ENCODE measurements at regions of chr9 and their contacts with region 1.

Region 1: DNA sequence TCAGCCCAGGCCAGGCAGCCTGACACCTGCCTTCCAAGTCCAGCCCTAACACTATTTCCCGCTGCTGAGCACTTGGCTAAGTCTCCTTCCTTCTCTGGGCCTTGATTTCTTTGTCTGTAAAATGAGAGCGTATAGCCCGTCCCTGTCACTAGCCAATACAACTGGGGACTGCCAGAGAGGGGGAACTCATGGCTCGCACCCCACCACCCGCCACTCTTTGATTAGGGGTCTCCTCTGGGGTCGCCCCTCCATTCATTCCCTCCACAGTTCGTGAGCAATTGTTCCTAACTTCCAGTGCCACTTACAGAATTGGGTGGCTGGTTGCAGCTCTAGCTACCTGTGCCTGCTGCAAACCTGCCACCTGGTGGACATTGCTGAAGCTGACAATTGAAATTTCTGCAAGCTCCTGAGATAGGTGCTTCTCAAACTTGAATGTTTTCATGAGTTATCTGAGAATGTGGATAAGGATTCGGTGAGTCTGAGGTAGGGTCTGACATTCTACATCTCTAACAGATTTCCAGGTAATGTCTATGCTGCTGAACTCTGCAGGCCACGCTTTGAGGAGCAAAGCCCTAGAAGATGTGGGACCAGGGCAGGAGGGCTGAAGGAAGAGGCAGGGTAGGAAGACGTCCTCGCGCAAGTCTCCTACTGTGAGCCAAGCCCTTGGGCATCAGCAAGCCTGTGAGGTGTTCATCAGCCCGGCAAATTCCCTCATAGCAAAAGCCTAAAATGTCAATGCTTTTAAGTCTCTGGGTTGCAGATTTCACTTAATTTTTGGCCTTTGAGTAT is 13.3 kb upstream of the RECK start:
- DNase-seq: peak; percentile 40 to 74 (median 66)
- ATAC-seq: peak; percentile 83
- H3K4me3 ChIP-seq: no peak overlapping the region
- H3K4me3 Mint-ChIP-seq: no peak overlapping the region
- H3K27ac ChIP-seq: no peak overlapping the region
- H3K27ac Mint-ChIP-seq: no peak overlapping the region
- H3K4me1 ChIP-seq: no peaks in the 10 kb centered on the region
- H3K4me1 Mint-ChIP-seq: peaks cover 0 to 8% (median 5%) of the 10 kb centered on the region in 7 donors
- H3K27me3 ChIP-seq: no peaks in the 10 kb centered on the region
- H3K27me3 Mint-ChIP-seq: peaks cover 0 to 9% (median 0%) of the 10 kb centered on the region in 5 donors

Region 2: GRCh38 chr9:35790385-35791296 is 232.8 kb before region 1 on chr9:
- CTCF ChIA-PET with region 1: interaction called, 3 read pairs
- POLR2A ChIA-PET with region 1: no interaction called
- intact Hi-C with region 1: loop called in 1 of 2 experiments (anchors 1 kb)
- DNase-seq: peak; percentile 36 to 70 (median 62)
- ATAC-seq: peak; percentile 90
- H3K4me3 ChIP-seq: no peak overlapping the region
- H3K4me3 Mint-ChIP-seq: peak overlapping the region in 2 of 10 donors; percentile 31 to 58
- H3K27ac ChIP-seq: no peak overlapping the region
- H3K27ac Mint-ChIP-seq: no peak overlapping the region
- H3K4me1 ChIP-seq: no peaks in the 10 kb centered on the region
- H3K4me1 Mint-ChIP-seq: peaks cover 6 to 21% (median 10%) of the 10 kb centered on the region in 7 donors
- H3K27me3 ChIP-seq: no peaks in the 10 kb centered on the region
- H3K27me3 Mint-ChIP-seq: no peaks in the 10 kb centered on the region

Region 3: DNA sequence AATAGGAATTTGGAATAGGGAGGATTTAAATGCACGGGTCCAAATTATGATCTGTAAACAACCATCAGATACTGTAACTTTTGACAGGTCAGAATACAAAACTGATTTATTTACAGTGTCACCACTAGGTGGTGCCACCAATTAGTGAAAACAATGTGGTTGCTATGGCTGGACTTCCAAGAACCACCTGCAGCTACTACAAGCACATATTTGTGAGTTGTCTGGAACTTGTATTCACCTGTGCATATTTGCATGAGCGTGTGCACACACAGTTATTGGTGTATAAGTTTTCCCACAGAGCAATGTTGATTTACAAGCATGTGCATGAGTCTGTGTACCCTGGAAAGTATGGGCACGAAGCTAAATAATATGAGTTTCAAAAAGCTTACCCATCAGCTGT is 120.4 kb before region 1 on chr9:
- CTCF ChIA-PET with region 1: interaction called, 42 read pairs
- POLR2A ChIA-PET with region 1: interaction called, 3 read pairs
- intact Hi-C with region 1: loop called (anchors 1 to 2 kb)
- DNase-seq: peak in 7 of 9 donors; percentile 41 to 69 (median 63)
- ATAC-seq: peak; percentile 88
- H3K4me3 ChIP-seq: no peak overlapping the region
- H3K4me3 Mint-ChIP-seq: no peak overlapping the region
- H3K27ac ChIP-seq: no peak overlapping the region
- H3K27ac Mint-ChIP-seq: peak overlapping the region in 1 of 9 donors; percentile 67
- H3K4me1 ChIP-seq: peaks cover 3 to 31% of the 10 kb centered on the region in 2 donors
- H3K4me1 Mint-ChIP-seq: peaks cover 8 to 45% (median 28%) of the 10 kb centered on the region in 7 donors
- H3K27me3 ChIP-seq: peaks cover 0 to 3% of the 10 kb centered on the region in 2 donors
- H3K27me3 Mint-ChIP-seq: peaks cover 0 to 23% (median 0%) of the 10 kb centered on the region in 5 donors

Region 4: GRCh38 chr9:35954942-35955546 is 68.4 kb before region 1 on chr9:
- CTCF ChIA-PET with region 1: interaction called, 41 read pairs
- POLR2A ChIA-PET with region 1: no interaction called
- intact Hi-C with region 1: loop called (anchors 1 kb)
- DNase-seq: peak in 7 of 9 donors; percentile 47 to 74 (median 66)
- ATAC-seq: peak; percentile 90
- H3K4me3 ChIP-seq: no peak overlapping the region
- H3K4me3 Mint-ChIP-seq: peak overlapping the region in 1 of 10 donors; percentile 29
- H3K27ac ChIP-seq: no peak overlapping the region
- H3K27ac Mint-ChIP-seq: peak overlapping the region in 1 of 9 donors; percentile 13
- H3K4me1 ChIP-seq: no peaks in the 10 kb centered on the region
- H3K4me1 Mint-ChIP-seq: peaks cover 0 to 18% (median 8%) of the 10 kb centered on the region in 7 donors
- H3K27me3 ChIP-seq: no peaks in the 10 kb centered on the region
- H3K27me3 Mint-ChIP-seq: peaks cover 0 to 25% (median 0%) of the 10 kb centered on the region in 5 donors

Region 5: DNA sequence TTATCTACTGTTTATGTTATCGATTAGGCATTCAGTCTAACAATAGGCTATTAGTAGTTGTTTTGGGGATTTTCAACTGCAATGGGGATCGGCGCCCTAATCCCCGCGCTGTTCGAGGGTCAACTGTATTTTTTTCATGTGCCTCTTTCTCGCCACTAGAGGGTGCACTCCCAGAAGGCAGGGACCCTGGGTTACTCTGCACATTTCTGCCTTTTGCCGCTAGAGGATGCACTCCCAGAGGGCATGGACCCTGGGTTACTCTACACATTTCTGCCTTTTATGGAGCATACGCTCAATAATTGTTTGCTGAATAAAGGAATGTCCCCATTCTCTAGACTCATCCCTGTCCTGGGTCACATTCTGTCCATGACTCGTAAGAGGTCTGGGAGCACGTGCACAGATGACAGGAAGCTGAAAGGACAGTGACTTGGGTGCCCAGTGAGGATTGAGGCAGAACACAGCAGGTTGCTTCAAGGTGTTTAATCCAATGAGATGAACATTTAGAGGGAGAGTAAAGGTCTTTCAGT is 14.6 kb before region 1 on chr9:
- CTCF ChIA-PET with region 1: interaction called, 25 read pairs
- POLR2A ChIA-PET with region 1: interaction called, 4 read pairs
- intact Hi-C with region 1: loop called (anchors 1 kb)
- DNase-seq: peak; percentile 4 to 73 (median 61)
- ATAC-seq: peak; percentile 98
- H3K4me3 ChIP-seq: no peak overlapping the region
- H3K4me3 Mint-ChIP-seq: peak overlapping the region in 3 of 10 donors; percentile 20 to 26 (median 23)
- H3K27ac ChIP-seq: no peak overlapping the region
- H3K27ac Mint-ChIP-seq: peak overlapping the region in 1 of 9 donors; percentile 36
- H3K4me1 ChIP-seq: peaks cover 0 to 5% of the 10 kb centered on the region in 2 donors
- H3K4me1 Mint-ChIP-seq: peaks cover 10 to 25% (median 20%) of the 10 kb centered on the region in 7 donors
- H3K27me3 ChIP-seq: no peaks in the 10 kb centered on the region
- H3K27me3 Mint-ChIP-seq: peaks cover 4 to 47% (median 20%) of the 10 kb centered on the region in 5 donors

Measured in naive thymus-derived CD4-positive, alpha-beta T cell (primary cell).